ENCODE measurements at regions of chr22 and their contacts with region 1.

Region 1: GRCh38 chr22:31290494-31291471 is 1.5 kb downstream of the PIK3IP1 start:
- DNase-seq: peak; percentile 94
- H3K4me3 ChIP-seq: peak overlapping the region; percentile 49
- H3K27ac ChIP-seq: no peak overlapping the region
- H3K4me1 ChIP-seq: peaks cover 23% of the 10 kb centered on the region
- H3K27me3 ChIP-seq: no peaks in the 10 kb centered on the region
- CTCF ChIP-seq: no peak

Region 2: GRCh38 chr22:31107178-31107893 is 183.4 kb before region 1 on chr22 and contains the start of gene SELENOM:
- CTCF ChIA-PET with region 1: no interaction called
- POLR2A ChIA-PET with region 1: no interaction called
- intact Hi-C with region 1: loop called (anchors 5 kb)
- DNase-seq: peak; percentile 94
- H3K4me3 ChIP-seq: peak within 1 kb of the TSS; percentile 57
- H3K27ac ChIP-seq: peak within 1 kb of the TSS; percentile 14
- H3K4me1 ChIP-seq: peaks cover 4% of the 10 kb centered on the region
- H3K27me3 ChIP-seq: no peaks in the 10 kb centered on the region
- CTCF ChIP-seq: peak; percentile 98
- total RNA-seq, gene SELENOM: 3.2 and 5.0 TPM in 2 replicates

Region 3: GRCh38 chr22:31211862-31212730 is 78.7 kb before region 1 on chr22 and contains the start of gene LIMK2:
- CTCF ChIA-PET with region 1: interaction called, 4 read pairs
- POLR2A ChIA-PET with region 1: no interaction called
- intact Hi-C with region 1: loop called (anchors 5 kb)
- DNase-seq: peak; percentile 94
- H3K4me3 ChIP-seq: peak within 1 kb of the TSS; percentile 62
- H3K27ac ChIP-seq: peak within 1 kb of the TSS; percentile 47
- H3K4me1 ChIP-seq: peaks cover 16% of the 10 kb centered on the region
- H3K27me3 ChIP-seq: no peaks in the 10 kb centered on the region
- CTCF ChIP-seq: peak; percentile 84
- total RNA-seq, gene LIMK2: 27.9 and 33.4 TPM in 2 replicates

Region 4: DNA sequence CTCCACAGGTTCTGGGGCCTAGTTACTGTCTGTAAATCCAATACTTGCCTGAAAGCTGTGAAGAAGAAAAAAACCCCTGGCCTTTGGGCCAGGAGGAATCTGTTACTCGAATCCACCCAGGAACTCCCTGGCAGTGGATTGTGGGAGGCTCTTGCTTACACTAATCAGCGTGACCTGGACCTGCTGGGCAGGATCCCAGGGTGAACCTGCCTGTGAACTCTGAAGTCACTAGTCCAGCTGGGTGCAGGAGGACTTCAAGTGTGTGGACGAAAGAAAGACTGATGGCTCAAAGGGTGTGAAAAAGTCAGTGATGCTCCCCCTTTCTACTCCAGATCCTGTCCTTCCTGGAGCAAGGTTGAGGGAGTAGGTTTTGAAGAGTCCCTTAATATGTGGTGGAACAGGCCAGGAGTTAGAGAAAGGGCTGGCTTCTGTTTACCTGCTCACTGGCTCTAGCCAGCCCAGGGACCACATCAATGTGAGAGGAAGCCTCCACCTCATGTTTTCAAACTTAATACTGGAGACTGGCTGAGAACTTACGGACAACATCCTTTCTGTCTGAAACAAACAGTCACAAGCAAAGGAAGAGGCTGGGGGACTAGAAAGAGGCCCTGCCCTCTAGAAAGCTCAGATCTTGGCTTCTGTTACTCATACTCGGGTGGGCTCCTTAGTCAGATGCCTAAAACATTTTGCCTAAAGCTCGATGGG is 12.0 kb before region 1 on chr22:
- CTCF ChIA-PET with region 1: no interaction called
- POLR2A ChIA-PET with region 1: no interaction called
- intact Hi-C with region 1: no loop called
- DNase-seq: no peak
- H3K4me3 ChIP-seq: no peak overlapping the region
- H3K27ac ChIP-seq: no peak overlapping the region
- H3K4me1 ChIP-seq: no peaks in the 10 kb centered on the region
- H3K27me3 ChIP-seq: no peaks in the 10 kb centered on the region
- CTCF ChIP-seq: no peak

Region 5: DNA sequence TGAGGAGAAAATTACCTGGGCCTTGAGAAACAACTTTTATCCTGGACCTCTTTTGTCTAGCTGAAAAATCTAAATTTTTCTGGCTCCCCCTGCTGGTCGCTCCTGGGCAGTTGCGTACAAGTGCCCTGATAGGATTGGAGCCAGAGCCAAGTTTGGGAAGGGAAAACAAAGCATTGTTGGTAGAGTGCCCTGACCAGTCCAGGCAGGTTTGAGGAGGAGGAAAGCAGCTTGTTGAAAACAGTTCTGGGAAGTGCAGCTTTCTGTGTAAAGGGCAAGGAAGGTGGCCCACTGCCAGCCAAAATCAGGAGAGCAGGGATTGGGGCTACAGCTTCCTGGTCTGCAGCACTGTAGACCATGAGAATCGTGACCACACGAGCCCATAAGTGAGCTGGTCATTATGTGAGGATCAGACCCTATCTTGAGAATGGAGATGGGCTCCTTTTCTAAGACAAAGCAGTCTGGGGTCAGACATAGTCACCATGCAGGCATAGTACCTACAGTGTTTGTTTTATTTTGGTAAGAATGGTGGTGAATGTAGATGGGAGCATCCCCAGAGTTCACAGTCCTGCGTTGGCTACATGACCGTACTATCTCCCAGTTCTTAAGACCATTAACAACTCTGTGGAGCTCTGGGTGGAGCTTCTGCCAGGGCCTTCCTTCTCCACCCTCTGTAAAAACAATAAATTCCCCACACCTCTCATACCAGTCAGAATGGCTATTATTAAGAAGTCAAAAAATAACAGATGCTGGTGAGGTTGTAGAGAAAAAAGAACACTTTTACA is 22.8 kb after region 1 on chr22:
- CTCF ChIA-PET with region 1: interaction called, 7 read pairs
- POLR2A ChIA-PET with region 1: no interaction called
- intact Hi-C with region 1: loop called (anchors 2 kb)
- DNase-seq: peak; percentile 62
- H3K4me3 ChIP-seq: no peak overlapping the region
- H3K27ac ChIP-seq: no peak overlapping the region
- H3K4me1 ChIP-seq: no peaks in the 10 kb centered on the region
- H3K27me3 ChIP-seq: no peaks in the 10 kb centered on the region
- CTCF ChIP-seq: peak; percentile 92

Measured in A673 (cell line).